ENCODE measurements at regions of chr3 and their contacts with region 1.

Region 1: GRCh38 chr3:27312044-27312668 is 57.0 kb downstream of the NEK10 start:
- DNase-seq: no peak
- H3K4me3 ChIP-seq: no peak overlapping the region
- H3K27ac ChIP-seq: no peak overlapping the region
- H3K4me1 ChIP-seq: peaks cover 0 to 3% (median 0%) of the 10 kb centered on the region in 6 donors
- H3K27me3 ChIP-seq: no peaks in the 10 kb centered on the region
- CTCF ChIP-seq: peak; percentile 64 to 86 (median 81)
- POLR2A ChIP-seq: no peak

Region 2: DNA sequence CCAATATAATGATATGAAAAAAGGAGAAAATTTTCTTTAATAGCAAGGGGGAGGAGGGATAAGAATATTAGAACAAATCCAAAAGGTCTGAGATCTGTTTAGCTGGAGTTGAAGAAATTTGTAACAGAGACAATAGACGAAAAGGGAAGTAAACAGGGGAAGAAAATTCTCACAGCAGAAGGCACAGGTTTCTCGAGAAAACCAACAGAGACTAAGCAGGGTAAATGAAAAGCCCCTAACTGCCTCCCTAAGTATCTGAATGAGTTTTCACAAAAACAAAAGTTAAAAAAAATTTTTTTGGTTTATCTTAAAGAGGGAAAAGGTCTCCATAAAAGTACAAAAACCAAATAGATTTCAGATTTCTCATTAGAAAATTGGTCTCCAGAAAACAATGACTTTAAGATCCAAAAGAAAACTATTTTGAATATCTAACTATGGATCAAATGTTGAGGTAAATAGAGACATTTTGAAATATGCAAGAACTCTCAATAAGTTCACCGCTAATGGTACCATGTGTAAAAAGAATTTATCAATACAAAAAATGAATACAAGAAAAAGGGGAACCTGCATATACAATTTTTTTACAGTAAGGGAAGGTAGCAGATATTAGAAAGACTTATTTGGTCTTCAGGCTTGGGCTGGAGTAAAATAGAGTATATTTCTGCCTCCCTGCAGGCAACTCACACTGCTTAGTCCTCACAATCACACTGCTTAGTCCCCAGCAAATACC is 81.0 kb after region 1 on chr3:
- intact Hi-C with region 1: no loop called
- DNase-seq: no peak
- H3K4me3 ChIP-seq: no peak overlapping the region
- H3K27ac ChIP-seq: no peak overlapping the region
- H3K4me1 ChIP-seq: no peaks in the 10 kb centered on the region
- H3K27me3 ChIP-seq: no peaks in the 10 kb centered on the region
- CTCF ChIP-seq: no peak
- POLR2A ChIP-seq: no peak

Region 3: GRCh38 chr3:27431116-27431515 is 119.0 kb after region 1 on chr3:
- intact Hi-C with region 1: no loop called
- DNase-seq: no peak
- H3K4me3 ChIP-seq: no peak overlapping the region
- H3K27ac ChIP-seq: no peak overlapping the region
- H3K4me1 ChIP-seq: no peaks in the 10 kb centered on the region
- H3K27me3 ChIP-seq: no peaks in the 10 kb centered on the region
- CTCF ChIP-seq: no peak
- POLR2A ChIP-seq: no peak

Region 4: DNA sequence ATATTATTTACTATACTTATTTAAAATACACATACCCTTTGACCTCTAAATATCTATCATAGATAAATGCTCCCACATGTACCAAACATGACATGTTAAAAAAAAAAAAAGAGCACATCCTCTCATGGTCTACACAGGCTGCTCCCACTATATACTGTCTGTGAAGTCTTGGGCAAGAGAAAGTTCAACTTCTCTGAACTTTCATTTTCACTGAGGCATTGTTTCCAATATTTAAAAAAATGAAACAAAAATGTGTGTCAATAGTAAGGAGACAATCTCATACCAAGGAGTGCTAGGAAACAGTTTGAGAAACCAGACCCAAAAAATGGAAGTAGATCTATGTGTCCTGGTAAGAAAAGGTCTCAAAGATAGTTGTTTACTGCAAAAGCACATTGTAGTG is 142.8 kb after region 1 on chr3:
- intact Hi-C with region 1: loop called (anchors 10 kb)
- DNase-seq: no peak
- H3K4me3 ChIP-seq: no peak overlapping the region
- H3K27ac ChIP-seq: peak overlapping the region in 3 of 8 donors; percentile 3 to 41 (median 6)
- H3K4me1 ChIP-seq: peaks cover 0 to 68% (median 19%) of the 10 kb centered on the region in 6 donors
- H3K27me3 ChIP-seq: no peaks in the 10 kb centered on the region
- CTCF ChIP-seq: no peak
- POLR2A ChIP-seq: no peak

Region 5: DNA sequence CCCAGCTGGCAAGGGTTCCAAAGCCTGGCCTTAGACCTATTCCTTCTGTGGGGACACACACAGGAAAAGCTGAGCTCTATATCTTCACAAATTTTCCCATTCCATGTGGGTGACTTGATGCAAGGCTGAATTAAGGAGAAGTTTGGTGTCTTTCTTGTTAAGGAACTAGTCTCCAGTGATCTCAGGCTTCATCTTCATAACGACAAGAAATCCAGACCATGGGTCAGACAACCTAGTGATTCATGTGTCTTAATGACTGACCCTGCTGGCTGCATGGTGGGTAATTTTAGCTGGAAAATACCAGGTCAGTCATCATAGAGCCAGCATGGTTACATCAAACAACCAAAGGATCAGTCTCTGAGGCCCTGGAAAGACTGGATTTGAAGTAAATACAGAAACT is 284.8 kb after region 1 on chr3:
- intact Hi-C with region 1: no loop called
- DNase-seq: no peak
- H3K4me3 ChIP-seq: no peak overlapping the region
- H3K27ac ChIP-seq: no peak overlapping the region
- H3K4me1 ChIP-seq: peaks cover 4 to 29% (median 16%) of the 10 kb centered on the region in 6 donors
- H3K27me3 ChIP-seq: no peaks in the 10 kb centered on the region
- CTCF ChIP-seq: no peak
- POLR2A ChIP-seq: no peak

Measured in spleen (tissue), 13 donors.